BJ (cell line): ENCODE measurements at regions of chr13 and their contacts with region 1.

Region 1: DNA sequence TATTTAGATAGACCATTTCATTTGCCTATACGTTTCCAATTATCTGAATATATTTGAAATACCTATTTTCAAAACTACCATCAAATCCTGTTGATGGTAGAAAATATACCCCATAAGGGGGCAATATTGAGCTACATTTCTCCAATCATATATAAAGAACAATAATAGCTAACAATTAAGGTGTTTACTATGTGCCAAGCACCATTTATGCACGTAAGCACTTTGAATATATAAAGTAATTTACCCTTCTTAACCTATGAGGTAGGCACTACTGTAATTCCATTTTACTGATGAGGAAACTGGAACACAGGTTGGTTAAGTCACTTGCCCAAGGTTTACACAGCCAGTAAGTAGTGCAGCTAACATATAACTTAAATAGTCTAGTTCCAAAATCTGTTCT is 79.2 kb downstream of the UBL3 start:
- DNase-seq: no peak
- H3K4me3 ChIP-seq: no peak overlapping the region
- H3K27me3 ChIP-seq: no peaks in the 10 kb centered on the region
- CTCF ChIP-seq: peak; percentile 24; the same call in 1 of the 2 replicates

Region 2: DNA sequence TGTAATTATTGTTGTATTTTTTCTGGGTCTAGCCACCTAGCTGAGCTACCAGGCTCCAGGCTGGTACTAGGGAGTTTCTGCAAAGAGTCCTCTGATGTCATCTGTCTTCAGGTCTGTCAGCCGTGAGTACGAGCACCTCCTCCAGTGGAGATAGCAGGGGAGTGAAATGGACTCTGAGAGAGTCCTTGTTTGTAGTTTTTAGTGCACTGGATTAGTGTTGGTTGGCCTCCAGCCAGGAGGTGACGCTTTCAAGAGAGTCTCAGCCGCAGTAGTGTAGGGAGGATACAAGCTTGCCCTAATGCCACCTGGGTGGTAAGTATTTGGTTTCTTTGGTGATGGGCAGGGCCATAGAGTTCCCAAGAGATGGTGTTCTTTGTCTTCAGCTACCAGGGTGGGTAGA is 560.6 kb before region 1 on chr13:
- CTCF ChIA-PET with region 1: no interaction called
- POLR2A ChIA-PET with region 1: no interaction called
- DNase-seq: no peak
- H3K4me3 ChIP-seq: no peak overlapping the region
- H3K27me3 ChIP-seq: no peaks in the 10 kb centered on the region
- CTCF ChIP-seq: no peak

Region 3: GRCh38 chr13:29758531-29759114 is 12.6 kb before region 1 on chr13:
- CTCF ChIA-PET with region 1: interaction called, 4 read pairs
- POLR2A ChIA-PET with region 1: interaction called, 21 read pairs
- DNase-seq: no peak
- H3K4me3 ChIP-seq: no peak overlapping the region
- H3K27me3 ChIP-seq: no peaks in the 10 kb centered on the region
- CTCF ChIP-seq: no peak

Region 4: GRCh38 chr13:29810145-29810742 is 39.0 kb after region 1 on chr13:
- CTCF ChIA-PET with region 1: no interaction called
- POLR2A ChIA-PET with region 1: interaction called, 15 read pairs
- DNase-seq: no peak
- H3K4me3 ChIP-seq: no peak overlapping the region
- H3K27me3 ChIP-seq: no peaks in the 10 kb centered on the region
- CTCF ChIP-seq: no peak

Region 5: GRCh38 chr13:30114571-30115256 is 343.5 kb after region 1 on chr13:
- CTCF ChIA-PET with region 1: interaction called, 70 read pairs
- POLR2A ChIA-PET with region 1: no interaction called
- DNase-seq: no peak
- H3K4me3 ChIP-seq: peak overlapping the region; percentile 43
- H3K27me3 ChIP-seq: no peaks in the 10 kb centered on the region
- CTCF ChIP-seq: peak; percentile 90